Mammary epithelial cell (primary cell): ENCODE measurements at regions of chr1 and their contacts with region 1.

Region 1: DNA sequence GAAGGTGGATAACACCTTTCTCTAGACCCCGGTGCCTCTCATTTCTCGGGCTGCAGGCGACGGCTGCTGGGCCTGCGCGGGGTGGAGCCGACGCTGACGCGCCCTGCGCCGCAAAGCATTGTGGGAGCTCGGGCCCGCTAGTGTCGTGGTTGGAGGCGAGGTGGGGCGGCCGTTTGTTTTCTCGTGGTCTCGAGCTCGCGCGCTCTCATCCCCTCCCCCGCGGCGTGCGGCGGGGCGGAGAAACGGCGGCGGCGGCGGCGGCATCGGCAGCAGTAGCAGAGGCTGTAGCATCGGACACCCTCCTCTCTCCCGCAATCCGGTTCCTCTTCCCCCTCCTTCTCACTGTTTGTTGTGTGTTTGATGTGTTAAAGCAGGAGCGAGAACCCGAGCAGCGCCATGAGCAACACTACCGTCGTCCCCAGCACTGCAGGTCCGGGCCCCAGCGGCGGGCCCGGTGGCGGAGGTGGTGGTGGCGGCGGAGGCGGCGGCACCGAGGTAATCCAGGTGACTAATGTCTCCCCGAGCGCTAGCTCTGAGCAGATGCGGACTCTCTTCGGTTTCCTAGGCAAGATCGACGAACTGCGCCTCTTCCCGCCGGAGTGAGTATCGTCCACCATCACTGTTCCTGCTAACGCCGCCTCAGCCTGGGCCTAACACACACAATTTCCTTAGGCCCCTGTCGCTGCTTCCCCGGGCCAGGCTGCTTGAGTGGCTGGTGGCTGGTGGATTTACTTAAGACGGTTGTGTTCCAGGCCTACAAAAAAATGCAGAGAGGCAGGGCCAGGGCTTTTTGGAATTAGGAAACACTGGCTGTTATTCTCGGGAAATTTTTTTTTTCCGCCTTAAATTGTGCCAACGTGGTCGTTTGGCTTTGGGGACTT is at the start of gene SRSF11:
- DNase-seq: peak; percentile 93
- H3K4me3 ChIP-seq: peak within 1 kb of the TSS; percentile 65 to 99 (median 80)
- H3K27ac ChIP-seq: peak within 1 kb of the TSS; percentile 90
- H3K4me1 ChIP-seq: peaks cover 11% of the 10 kb centered on the region
- H3K27me3 ChIP-seq: no peaks in the 10 kb centered on the region
- CTCF ChIP-seq: peak in 1 of 2 donors; percentile 11
- total RNA-seq, gene SRSF11: 95.0 to 141 TPM

Region 2: DNA sequence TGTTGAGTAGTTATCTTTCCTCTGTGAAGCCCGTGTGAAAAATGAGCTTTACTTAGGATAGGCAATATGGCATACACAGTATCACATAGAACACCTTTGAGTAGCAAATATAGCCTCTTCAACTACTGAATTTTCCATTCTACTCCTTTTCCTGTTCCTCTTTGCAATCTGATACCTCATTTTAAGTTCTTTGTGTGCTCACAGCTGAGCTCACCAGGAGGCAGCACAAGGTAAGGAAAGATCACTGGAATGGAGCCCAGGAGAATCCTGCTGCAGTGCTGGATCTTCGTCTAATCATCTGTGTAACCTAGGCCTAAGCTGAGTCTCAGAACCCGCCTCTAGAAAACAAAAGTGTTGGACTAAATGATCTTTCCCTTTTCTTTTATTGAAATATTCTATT is 187.1 kb before region 1 on chr1:
- CTCF ChIA-PET with region 1: no interaction called
- dilution Hi-C with region 1: no loop called
- in situ Hi-C with region 1: no loop called
- intact Hi-C with region 1: loop called (anchors 5 kb)
- DNase-seq: peak; percentile 43
- H3K4me3 ChIP-seq: no peak overlapping the region
- H3K27ac ChIP-seq: no peak overlapping the region
- H3K4me1 ChIP-seq: peaks cover 7% of the 10 kb centered on the region
- H3K27me3 ChIP-seq: no peaks in the 10 kb centered on the region
- CTCF ChIP-seq: peak; percentile 69

Region 3: DNA sequence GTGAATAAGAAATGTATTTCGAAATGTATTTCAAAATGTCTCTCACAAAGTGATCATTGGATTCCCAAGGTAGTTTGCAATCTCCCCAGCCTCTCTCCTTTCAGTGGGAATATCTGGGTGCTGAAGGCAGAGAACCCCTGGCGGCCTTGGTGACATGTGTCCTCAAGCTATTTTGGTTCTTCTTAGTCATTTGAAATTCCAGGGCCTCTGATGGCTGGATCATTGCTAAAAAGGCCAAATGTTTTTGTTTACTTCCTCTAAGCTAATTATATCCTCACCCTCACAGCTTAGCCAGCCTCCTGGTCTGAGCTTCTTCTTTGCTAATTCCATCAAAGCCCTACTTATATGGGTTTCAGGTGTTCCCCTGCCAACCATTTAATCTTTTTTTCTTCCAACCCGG is 87.3 kb before region 1 on chr1:
- CTCF ChIA-PET with region 1: no interaction called
- dilution Hi-C with region 1: no loop called
- in situ Hi-C with region 1: no loop called
- intact Hi-C with region 1: loop called (anchors 5 kb)
- DNase-seq: no peak
- H3K4me3 ChIP-seq: no peak overlapping the region
- H3K27ac ChIP-seq: no peak overlapping the region
- H3K4me1 ChIP-seq: no peaks in the 10 kb centered on the region
- H3K27me3 ChIP-seq: no peaks in the 10 kb centered on the region
- CTCF ChIP-seq: no peak

Region 4: GRCh38 chr1:70205434-70206118 is 15.9 kb before region 1 on chr1 and contains the start of gene LRRC40:
- CTCF ChIA-PET with region 1: no interaction called
- dilution Hi-C with region 1: no loop called
- in situ Hi-C with region 1: no loop called
- intact Hi-C with region 1: loop called (anchors 1 kb)
- DNase-seq: peak; percentile 95
- H3K4me3 ChIP-seq: peak within 1 kb of the TSS; percentile 73 to 91 (median 77)
- H3K27ac ChIP-seq: peak within 1 kb of the TSS; percentile 97
- H3K4me1 ChIP-seq: peaks cover 8% of the 10 kb centered on the region
- H3K27me3 ChIP-seq: no peaks in the 10 kb centered on the region
- CTCF ChIP-seq: no peak
- total RNA-seq, gene LRRC40: 18.2 to 20.7 TPM

Region 5: DNA sequence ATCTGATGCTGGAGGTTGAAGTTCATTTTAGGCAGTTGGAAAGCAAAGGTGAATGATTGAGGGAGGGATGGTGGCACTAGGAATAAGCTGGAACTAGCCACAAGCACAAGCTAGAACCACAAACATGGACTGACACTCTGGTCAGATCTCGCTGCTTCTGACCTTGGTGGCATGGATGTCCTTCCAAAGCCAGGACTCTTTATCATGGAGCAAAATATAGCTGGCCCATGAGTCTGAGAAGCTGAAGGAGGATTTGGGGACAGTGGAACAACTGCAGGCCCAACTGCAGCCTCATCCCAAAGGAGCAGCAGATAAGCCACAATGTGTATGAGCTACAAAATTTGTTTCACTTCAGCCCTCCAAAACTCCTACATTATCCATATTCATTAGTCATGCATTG is 35.2 kb after region 1 on chr1:
- CTCF ChIA-PET with region 1: no interaction called
- dilution Hi-C with region 1: no loop called
- in situ Hi-C with region 1: no loop called
- intact Hi-C with region 1: no loop called
- DNase-seq: no peak
- H3K4me3 ChIP-seq: no peak overlapping the region
- H3K27ac ChIP-seq: no peak overlapping the region
- H3K4me1 ChIP-seq: no peaks in the 10 kb centered on the region
- H3K27me3 ChIP-seq: no peaks in the 10 kb centered on the region
- CTCF ChIP-seq: no peak

Region 6: GRCh38 chr1:70410604-70411359 is 189.3 kb after region 1 on chr1 and contains the start of gene CTH:
- CTCF ChIA-PET with region 1: no interaction called
- dilution Hi-C with region 1: no loop called
- in situ Hi-C with region 1: no loop called
- intact Hi-C with region 1: loop called (anchors 10 kb)
- DNase-seq: peak; percentile 95
- H3K4me3 ChIP-seq: peak within 1 kb of the TSS; percentile 80 to 98 (median 92)
- H3K27ac ChIP-seq: peak within 1 kb of the TSS; percentile 92
- H3K4me1 ChIP-seq: peaks cover 4% of the 10 kb centered on the region
- H3K27me3 ChIP-seq: no peaks in the 10 kb centered on the region
- CTCF ChIP-seq: no peak
- total RNA-seq, gene CTH: 3.5 to 6.2 TPM